Thyroid gland (tissue), 4 donors: ENCODE measurements at regions of chr14 and their contacts with region 1.

Region 1: DNA sequence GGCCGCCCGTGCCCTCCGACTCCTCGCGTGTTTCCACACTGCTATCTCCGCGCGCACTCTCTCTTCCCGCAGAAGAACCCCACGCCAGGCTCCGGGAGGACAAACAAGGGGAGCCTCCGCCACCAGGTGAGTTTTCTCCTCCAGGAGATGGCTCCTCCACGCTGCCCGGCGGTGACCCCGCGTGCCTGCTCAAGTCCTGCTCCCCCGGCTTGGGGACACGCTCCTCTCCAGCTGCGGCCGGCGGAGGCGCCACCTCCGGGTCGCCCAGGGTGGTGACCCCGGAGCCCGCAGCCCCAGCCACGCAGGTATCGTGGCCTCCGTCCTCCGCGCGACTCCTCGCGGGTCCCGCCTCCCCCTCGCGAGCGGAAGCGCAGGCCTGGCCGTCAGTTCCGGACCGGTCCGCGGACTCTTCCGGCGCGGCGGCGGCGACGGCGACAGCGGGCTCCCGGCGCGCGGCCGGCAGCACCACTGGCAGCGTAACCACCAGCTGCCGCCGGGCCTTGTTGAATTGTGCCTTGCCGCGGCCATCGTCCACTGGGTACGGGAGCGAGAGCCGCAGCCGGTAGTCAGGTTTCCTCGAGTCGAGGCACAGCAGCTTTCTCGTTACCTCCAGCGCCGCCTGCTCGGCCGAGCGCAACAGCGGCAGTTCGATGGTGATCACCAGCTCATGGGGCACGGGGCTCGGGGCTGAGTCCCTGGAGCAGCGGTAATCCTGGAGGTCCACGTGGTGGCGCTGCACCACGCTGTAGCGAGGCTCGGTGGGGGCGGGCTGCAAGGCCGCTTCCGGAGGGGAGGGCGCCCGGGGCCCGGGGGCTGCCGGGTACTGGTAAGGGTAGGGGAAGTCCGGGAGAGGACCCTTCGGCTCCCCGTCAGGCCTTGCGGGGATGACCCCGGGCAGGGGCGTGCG is 1.2 kb downstream of the DNAAF2 start:
- DNase-seq: peak; percentile 94 to 95
- H3K4me3 ChIP-seq: peak overlapping the region; percentile 44 to 75 (median 72)
- H3K27ac ChIP-seq: peak overlapping the region; percentile 66 to 98 (median 97)
- H3K4me1 ChIP-seq: peaks cover 6 to 24% of the 10 kb centered on the region in 2 donors
- H3K27me3 ChIP-seq: no peaks in the 10 kb centered on the region
- CTCF ChIP-seq: peak; percentile 32 to 93 (median 74)
- POLR2A ChIP-seq: peak; percentile 76 to 91

Region 2: DNA sequence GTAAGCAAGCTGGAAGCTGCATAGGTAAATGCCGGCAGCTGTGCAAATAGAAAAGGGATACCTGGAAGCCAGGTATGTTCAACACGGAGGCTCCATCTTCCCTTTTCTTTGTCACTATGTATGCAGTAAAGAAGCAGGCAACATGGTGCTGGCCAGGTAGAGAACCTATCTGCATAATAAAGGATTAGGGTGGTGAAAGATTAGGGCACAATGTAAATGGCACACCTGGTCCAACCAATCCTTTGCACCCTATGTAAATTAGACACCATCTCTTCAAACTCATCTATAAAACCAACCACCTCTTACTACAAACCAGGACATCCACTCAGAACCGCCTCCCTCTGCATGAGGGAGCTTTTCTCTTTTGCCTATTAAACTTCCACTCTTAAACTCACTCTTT is 80.0 kb before region 1 on chr14:
- intact Hi-C with region 1: no loop called
- DNase-seq: no peak
- H3K4me3 ChIP-seq: no peak overlapping the region
- H3K27ac ChIP-seq: no peak overlapping the region
- H3K4me1 ChIP-seq: no peaks in the 10 kb centered on the region
- H3K27me3 ChIP-seq: no peaks in the 10 kb centered on the region
- CTCF ChIP-seq: no peak
- POLR2A ChIP-seq: no peak

Region 3: DNA sequence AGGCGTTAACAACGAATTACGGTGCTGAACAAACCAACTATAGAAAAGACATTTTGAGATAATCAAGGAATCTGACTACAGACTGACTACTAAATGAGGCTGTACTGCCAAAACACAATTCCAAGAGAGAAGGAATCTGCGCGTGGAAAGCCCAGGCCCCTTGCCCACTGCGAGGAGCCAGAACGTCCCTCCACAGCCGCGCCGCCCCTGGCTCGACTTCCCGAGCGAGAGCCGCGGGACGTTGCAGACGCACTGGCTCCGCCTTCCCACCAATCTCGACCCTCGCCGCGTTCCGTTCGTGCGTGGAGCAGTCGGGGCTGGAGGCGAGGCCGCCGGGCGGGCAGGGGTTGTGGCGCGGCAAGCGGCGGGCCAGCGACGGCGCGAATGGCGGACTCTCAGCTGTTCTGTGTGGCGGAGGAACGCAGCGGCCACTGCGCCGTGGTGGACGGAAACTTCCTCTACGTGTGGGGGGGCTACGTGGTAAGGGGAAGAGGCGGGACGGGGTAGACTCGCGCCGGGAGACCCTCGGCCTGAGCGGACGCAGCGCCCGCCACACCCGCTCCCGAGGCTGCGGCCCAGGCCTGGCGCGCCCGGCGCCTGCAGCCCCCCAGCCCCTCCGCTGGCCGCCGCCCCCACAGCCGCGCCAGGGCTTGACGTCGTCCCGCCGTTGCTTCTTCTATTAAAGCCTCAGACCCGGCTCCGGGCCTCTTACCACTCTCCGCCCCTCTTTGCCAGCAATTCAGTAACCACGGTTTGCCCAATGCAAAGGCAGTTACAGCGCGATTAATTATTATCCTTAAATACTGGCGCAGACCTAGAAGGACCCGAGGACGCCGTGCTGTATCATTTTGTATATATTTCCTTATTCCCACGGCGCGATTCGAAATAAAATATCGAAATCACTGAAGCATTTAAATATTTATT is 59.2 kb after region 1 on chr14 and contains the start of gene KLHDC1:
- intact Hi-C with region 1: loop called (anchors 10 kb)
- DNase-seq: peak; percentile 87 to 89
- H3K4me3 ChIP-seq: peak within 1 kb of the TSS; percentile 24 to 59 (median 48)
- H3K27ac ChIP-seq: peak within 1 kb of the TSS; percentile 92 to 98 (median 93)
- H3K4me1 ChIP-seq: peaks cover 4 to 14% of the 10 kb centered on the region in 2 donors
- H3K27me3 ChIP-seq: no peaks in the 10 kb centered on the region
- CTCF ChIP-seq: no peak
- POLR2A ChIP-seq: peak; percentile 86 to 95
- total RNA-seq, gene KLHDC1: 9.2 to 16.3 (median 12.4) TPM

Region 4: GRCh38 chr14:49767562-49768300 is 133.8 kb after region 1 on chr14 and contains the start of gene KLHDC2:
- intact Hi-C with region 1: loop called (anchors 5 kb)
- DNase-seq: peak; percentile 88 to 91
- H3K4me3 ChIP-seq: peak within 1 kb of the TSS; percentile 76 to 100 (median 96)
- H3K27ac ChIP-seq: peak within 1 kb of the TSS; percentile 99 to 100 (median 99)
- H3K4me1 ChIP-seq: peaks cover 14 to 28% of the 10 kb centered on the region in 2 donors
- H3K27me3 ChIP-seq: no peaks in the 10 kb centered on the region
- CTCF ChIP-seq: peak in 2 of 6 experiments; percentile 40 to 57
- POLR2A ChIP-seq: peak; percentile 96 to 99
- total RNA-seq, gene KLHDC2: 101 to 165 (median 133) TPM

Region 5: GRCh38 chr14:49828640-49829039 is 194.7 kb after region 1 on chr14:
- intact Hi-C with region 1: loop called (anchors 10 kb)
- DNase-seq: no peak
- H3K4me3 ChIP-seq: no peak overlapping the region
- H3K27ac ChIP-seq: no peak overlapping the region
- H3K4me1 ChIP-seq: no peaks in the 10 kb centered on the region
- H3K27me3 ChIP-seq: no peaks in the 10 kb centered on the region
- CTCF ChIP-seq: no peak
- POLR2A ChIP-seq: no peak